CD4-positive, alpha-beta T cell (primary cell): ENCODE measurements at regions of chr13 and their contacts with region 1.

Region 1: DNA sequence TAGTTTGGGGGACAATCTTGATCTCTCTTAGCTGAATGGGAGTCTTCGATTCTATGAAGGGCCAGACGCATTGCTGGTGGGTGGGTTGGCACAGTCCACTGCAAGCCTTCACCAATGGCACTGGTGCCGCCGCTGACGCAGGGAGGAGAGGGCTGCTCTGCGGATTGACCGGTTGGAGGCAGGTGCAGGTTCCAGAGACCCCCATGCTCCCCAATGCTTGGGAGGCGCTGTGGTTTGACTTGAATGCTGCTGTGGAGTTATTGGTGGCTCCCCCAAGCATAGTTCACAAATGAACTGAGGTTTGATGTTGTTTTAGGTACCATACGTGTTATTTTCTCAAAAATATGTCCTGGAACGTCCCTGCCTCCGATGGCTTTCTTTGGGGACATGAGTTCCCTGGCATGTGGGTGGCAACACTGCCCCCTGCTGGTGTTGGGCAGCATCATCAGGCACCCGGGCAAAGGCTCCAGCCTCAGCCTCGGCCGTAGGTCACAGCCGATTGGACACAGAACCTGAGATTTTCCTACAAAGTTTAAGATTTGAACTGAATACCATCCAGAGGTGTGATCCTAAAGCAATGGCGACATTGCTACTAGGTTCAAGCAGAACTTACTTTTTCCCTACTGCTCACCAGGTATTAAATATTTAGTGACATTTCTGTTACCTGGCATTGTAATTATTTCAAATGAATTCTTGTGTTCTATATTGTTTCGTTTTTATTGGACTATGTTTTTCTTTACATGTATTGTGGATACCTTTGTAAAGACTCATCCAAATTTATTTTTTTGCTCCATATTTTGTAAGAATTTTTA is 95.5 kb downstream of the ANKRD10 start:
- DNase-seq: peak; percentile 56 to 87 (median 68)
- ATAC-seq: peak; percentile 76
- H3K4me3 ChIP-seq: no peak overlapping the region
- H3K4me3 Mint-ChIP-seq: no peak overlapping the region
- H3K27ac ChIP-seq: no peak overlapping the region
- H3K27ac Mint-ChIP-seq: no peak overlapping the region
- H3K4me1 ChIP-seq: peaks cover 6% of the 10 kb centered on the region
- H3K4me1 Mint-ChIP-seq: peaks cover 6% of the 10 kb centered on the region
- H3K27me3 ChIP-seq: no peaks in the 10 kb centered on the region
- H3K27me3 Mint-ChIP-seq: peaks cover 15% of the 10 kb centered on the region
- CTCF ChIP-seq: peak; percentile 97

Region 2: DNA sequence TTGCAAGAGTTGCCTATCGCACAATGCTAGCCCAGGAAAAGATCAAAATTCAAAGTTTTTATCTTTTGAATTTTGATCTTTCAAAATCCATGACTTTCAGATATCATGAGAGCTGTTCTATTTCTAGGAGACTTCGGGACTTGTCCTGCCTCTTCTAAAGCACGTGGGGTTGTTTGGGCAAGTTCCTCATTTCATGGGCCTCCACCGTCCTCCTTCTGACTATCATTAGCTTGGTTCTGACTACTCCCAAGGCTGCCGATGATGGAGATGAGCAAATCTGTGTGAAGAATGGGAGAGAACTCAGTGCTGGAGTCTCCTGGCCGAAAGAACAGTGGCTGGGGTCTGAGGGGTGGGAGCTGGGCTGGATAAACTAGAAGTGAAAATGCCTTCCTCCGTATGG is 598.9 kb before region 1 on chr13:
- CTCF ChIA-PET with region 1: no interaction called
- POLR2A ChIA-PET with region 1: no interaction called
- intact Hi-C with region 1: loop called (anchors 5 to 10 kb)
- DNase-seq: no peak
- ATAC-seq: no peak
- H3K4me3 ChIP-seq: no peak overlapping the region
- H3K4me3 Mint-ChIP-seq: no peak overlapping the region
- H3K27ac ChIP-seq: no peak overlapping the region
- H3K27ac Mint-ChIP-seq: no peak overlapping the region
- H3K4me1 ChIP-seq: no peaks in the 10 kb centered on the region
- H3K4me1 Mint-ChIP-seq: no peaks in the 10 kb centered on the region
- H3K27me3 ChIP-seq: peaks cover 3 to 6% of the 10 kb centered on the region in 2 experiments
- H3K27me3 Mint-ChIP-seq: peaks cover 37% of the 10 kb centered on the region
- CTCF ChIP-seq: no peak

Region 3: DNA sequence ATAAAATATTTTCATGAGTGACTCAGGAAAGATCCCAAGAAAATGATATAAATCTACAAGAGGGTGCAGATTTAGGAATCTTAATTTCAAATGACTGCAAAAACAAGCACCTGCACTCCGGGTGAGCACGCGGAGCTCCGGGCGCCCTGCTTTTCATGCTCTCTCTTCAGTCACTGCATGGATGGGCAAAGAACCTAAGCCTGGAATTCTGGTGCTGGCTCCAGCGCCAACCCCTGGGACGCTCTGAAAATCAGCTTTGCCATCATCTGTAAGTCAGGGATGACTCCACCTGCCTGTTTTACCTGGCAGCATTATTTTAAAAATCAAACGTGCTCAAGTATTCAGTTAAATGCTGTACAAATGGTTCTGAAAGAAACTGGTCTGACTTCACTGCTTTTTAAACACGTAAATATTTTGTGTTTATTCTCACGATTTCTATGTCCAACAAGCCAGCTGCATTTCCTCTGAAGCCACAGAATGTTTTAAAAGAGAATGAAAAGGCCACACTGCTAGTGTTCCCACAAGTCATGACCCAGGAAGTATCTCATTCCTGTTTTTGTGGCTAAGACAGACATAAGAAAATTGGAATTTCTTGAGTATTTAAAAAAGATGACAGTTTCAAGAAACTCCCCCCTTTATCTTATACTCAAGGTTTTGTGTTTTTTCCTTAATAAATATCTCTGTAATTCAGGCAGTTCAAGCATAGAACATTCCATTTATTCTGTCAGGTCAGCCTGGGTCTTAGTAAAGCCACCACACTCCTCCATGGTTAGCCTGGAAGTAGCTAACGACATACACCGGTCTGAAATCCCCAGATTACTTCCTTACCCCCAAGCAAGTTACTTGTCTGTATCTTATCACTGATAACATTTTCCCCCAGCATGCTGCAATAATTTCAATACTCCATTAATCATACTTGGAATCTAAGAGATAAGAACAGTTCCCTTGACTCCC is 593.5 kb before region 1 on chr13:
- CTCF ChIA-PET with region 1: no interaction called
- POLR2A ChIA-PET with region 1: no interaction called
- intact Hi-C with region 1: loop called (anchors 5 to 10 kb)
- DNase-seq: no peak
- ATAC-seq: no peak
- H3K4me3 ChIP-seq: no peak overlapping the region
- H3K4me3 Mint-ChIP-seq: no peak overlapping the region
- H3K27ac ChIP-seq: no peak overlapping the region
- H3K27ac Mint-ChIP-seq: no peak overlapping the region
- H3K4me1 ChIP-seq: no peaks in the 10 kb centered on the region
- H3K4me1 Mint-ChIP-seq: no peaks in the 10 kb centered on the region
- H3K27me3 ChIP-seq: peaks cover 0 to 3% of the 10 kb centered on the region in 2 experiments
- H3K27me3 Mint-ChIP-seq: peaks cover 18% of the 10 kb centered on the region
- CTCF ChIP-seq: no peak

Region 4: GRCh38 chr13:110455941-110456340 is 363.5 kb before region 1 on chr13:
- CTCF ChIA-PET with region 1: no interaction called
- POLR2A ChIA-PET with region 1: no interaction called
- intact Hi-C with region 1: loop called in 1 of 2 experiments (anchors 2 kb)
- DNase-seq: peak; percentile 31 to 76 (median 47)
- ATAC-seq: peak; percentile 75
- H3K4me3 ChIP-seq: no peak overlapping the region
- H3K4me3 Mint-ChIP-seq: no peak overlapping the region
- H3K27ac ChIP-seq: no peak overlapping the region
- H3K27ac Mint-ChIP-seq: no peak overlapping the region
- H3K4me1 ChIP-seq: peaks cover 4% of the 10 kb centered on the region
- H3K4me1 Mint-ChIP-seq: peaks cover 4% of the 10 kb centered on the region
- H3K27me3 ChIP-seq: peaks cover 0 to 10% of the 10 kb centered on the region in 2 experiments
- H3K27me3 Mint-ChIP-seq: peaks cover 46% of the 10 kb centered on the region
- CTCF ChIP-seq: peak; percentile 76

Region 5: DNA sequence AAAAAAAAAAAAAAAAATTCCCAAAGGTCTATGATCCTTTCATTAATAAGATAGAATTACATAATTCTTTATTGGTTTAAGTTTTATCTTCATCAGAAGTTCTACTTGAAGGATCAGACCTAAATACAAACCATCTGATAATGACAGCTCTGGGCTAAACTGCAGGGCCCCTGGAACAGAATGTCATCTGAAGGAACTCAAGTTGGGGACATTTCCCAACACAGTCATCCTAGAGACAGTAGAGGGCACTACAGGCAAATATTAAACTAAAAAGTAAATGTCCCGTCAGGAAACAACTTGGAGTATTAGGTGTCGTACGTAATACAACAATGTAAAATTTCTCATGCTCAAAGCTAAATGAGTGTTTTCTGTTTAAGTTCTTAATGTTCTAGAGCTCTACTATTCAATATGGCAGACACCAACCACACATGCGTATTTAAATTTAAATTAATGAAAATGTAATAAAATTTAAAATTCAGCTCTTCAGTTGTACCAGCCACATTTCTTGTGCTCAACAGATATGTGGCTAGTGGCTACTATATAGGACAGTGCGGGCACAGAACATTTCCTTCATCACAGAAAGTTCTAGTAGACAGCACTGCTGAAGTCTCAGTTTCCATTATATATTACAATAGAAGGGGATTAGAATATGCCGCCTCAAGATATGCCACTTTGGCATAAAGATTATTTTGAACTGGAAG is 225.8 kb before region 1 on chr13:
- CTCF ChIA-PET with region 1: no interaction called
- POLR2A ChIA-PET with region 1: no interaction called
- intact Hi-C with region 1: loop called (anchors 1 to 5 kb)
- DNase-seq: peak in 4 of 14 experiments; percentile 13 to 65 (median 61)
- ATAC-seq: peak; percentile 60
- H3K4me3 ChIP-seq: no peak overlapping the region
- H3K4me3 Mint-ChIP-seq: no peak overlapping the region
- H3K27ac ChIP-seq: no peak overlapping the region
- H3K27ac Mint-ChIP-seq: no peak overlapping the region
- H3K4me1 ChIP-seq: no peaks in the 10 kb centered on the region
- H3K4me1 Mint-ChIP-seq: no peaks in the 10 kb centered on the region
- H3K27me3 ChIP-seq: no peaks in the 10 kb centered on the region
- H3K27me3 Mint-ChIP-seq: peaks cover 5% of the 10 kb centered on the region
- CTCF ChIP-seq: peak; percentile 58

Region 6: DNA sequence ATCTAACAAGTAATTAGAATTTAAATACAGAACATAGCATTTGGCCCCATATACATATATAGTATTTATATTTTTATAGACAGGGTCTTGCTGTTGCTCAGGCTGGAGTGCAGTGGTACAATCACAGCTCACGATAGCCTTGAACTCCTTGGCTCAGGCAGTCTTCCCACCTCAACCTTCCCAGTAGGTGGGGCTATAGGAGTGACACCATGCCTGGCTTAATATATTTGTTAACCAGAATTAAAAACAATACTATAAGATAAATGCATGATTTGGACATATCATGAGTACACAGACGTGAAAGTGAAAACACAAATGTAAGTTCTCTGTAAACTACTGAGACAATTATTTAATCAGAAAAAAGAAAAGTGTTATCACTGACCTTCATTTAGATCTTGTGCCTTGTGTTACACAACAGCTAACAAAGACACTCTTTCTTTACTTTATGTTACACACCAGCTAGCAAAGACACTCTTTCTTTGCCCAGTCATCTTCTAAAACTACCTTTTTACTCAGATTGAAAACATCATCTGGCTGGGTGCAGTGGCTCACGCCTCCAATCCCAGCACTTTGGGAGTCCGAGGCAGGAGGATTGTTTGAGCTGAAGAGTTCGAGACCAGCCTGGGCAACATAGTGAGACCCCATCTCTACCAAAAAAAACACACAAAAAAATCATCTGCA is 136.1 kb before region 1 on chr13:
- CTCF ChIA-PET with region 1: interaction called, 4 read pairs
- POLR2A ChIA-PET with region 1: no interaction called
- intact Hi-C with region 1: loop called (anchors 1 kb)
- DNase-seq: peak in 6 of 14 experiments; percentile 16 to 72 (median 39)
- ATAC-seq: peak; percentile 65
- H3K4me3 ChIP-seq: no peak overlapping the region
- H3K4me3 Mint-ChIP-seq: no peak overlapping the region
- H3K27ac ChIP-seq: no peak overlapping the region
- H3K27ac Mint-ChIP-seq: no peak overlapping the region
- H3K4me1 ChIP-seq: no peaks in the 10 kb centered on the region
- H3K4me1 Mint-ChIP-seq: no peaks in the 10 kb centered on the region
- H3K27me3 ChIP-seq: no peaks in the 10 kb centered on the region
- H3K27me3 Mint-ChIP-seq: no peaks in the 10 kb centered on the region
- CTCF ChIP-seq: peak; percentile 75

Region 7: GRCh38 chr13:110705826-110706569 is 113.4 kb before region 1 on chr13 and contains the start of gene CARS2:
- CTCF ChIA-PET with region 1: no interaction called
- POLR2A ChIA-PET with region 1: interaction called, 3 read pairs
- intact Hi-C with region 1: loop called in 1 of 2 experiments (anchors 1 kb)
- DNase-seq: peak; percentile 83 to 98 (median 91)
- ATAC-seq: peak; percentile 91
- H3K4me3 ChIP-seq: peak within 1 kb of the TSS; percentile 71
- H3K4me3 Mint-ChIP-seq: peak within 1 kb of the TSS; percentile 94
- H3K27ac ChIP-seq: peak within 1 kb of the TSS in 1 of 2 donors; percentile 35
- H3K27ac Mint-ChIP-seq: peak within 1 kb of the TSS; percentile 92
- H3K4me1 ChIP-seq: peaks cover 41% of the 10 kb centered on the region
- H3K4me1 Mint-ChIP-seq: peaks cover 43% of the 10 kb centered on the region
- H3K27me3 ChIP-seq: no peaks in the 10 kb centered on the region
- H3K27me3 Mint-ChIP-seq: no peaks in the 10 kb centered on the region
- CTCF ChIP-seq: no peak
- total RNA-seq, gene CARS2: 50.2 to 56.5 TPM